ENCODE measurements at regions of chr10 and their contacts with region 1.

Region 1: GRCh38 chr10:43436400-43437140 is at the start of gene ZNF487:
- DNase-seq: peak; percentile 83 to 97
- H3K4me3 ChIP-seq: peak within 1 kb of the TSS; percentile 98
- H3K27ac ChIP-seq: peak within 1 kb of the TSS; percentile 88
- H3K4me1 ChIP-seq: 0 out of 2 replicates have a peak, but pooled peaks cover 4% of the 10 kb centered on the region
- H3K27me3 ChIP-seq: no peaks in the 10 kb centered on the region
- CTCF ChIP-seq: no peak
- total RNA-seq, gene ZNF487: 11.8 and 14.5 TPM in 2 replicates

Region 2: GRCh38 chr10:43380610-43381222 is 55.9 kb before region 1 on chr10:
- CTCF ChIA-PET with region 1: no interaction called
- POLR2A ChIA-PET with region 1: interaction called, 15 read pairs
- intact Hi-C with region 1: no loop called
- DNase-seq: peak in 1 of 2 experiments; percentile 39
- H3K4me3 ChIP-seq: no peak overlapping the region
- H3K27ac ChIP-seq: peak overlapping the region; percentile 78
- H3K4me1 ChIP-seq: peaks cover 5% of the 10 kb centered on the region
- H3K27me3 ChIP-seq: no peaks in the 10 kb centered on the region
- CTCF ChIP-seq: peak; percentile 46; the same call in 1 of the 2 replicates

Region 3: DNA sequence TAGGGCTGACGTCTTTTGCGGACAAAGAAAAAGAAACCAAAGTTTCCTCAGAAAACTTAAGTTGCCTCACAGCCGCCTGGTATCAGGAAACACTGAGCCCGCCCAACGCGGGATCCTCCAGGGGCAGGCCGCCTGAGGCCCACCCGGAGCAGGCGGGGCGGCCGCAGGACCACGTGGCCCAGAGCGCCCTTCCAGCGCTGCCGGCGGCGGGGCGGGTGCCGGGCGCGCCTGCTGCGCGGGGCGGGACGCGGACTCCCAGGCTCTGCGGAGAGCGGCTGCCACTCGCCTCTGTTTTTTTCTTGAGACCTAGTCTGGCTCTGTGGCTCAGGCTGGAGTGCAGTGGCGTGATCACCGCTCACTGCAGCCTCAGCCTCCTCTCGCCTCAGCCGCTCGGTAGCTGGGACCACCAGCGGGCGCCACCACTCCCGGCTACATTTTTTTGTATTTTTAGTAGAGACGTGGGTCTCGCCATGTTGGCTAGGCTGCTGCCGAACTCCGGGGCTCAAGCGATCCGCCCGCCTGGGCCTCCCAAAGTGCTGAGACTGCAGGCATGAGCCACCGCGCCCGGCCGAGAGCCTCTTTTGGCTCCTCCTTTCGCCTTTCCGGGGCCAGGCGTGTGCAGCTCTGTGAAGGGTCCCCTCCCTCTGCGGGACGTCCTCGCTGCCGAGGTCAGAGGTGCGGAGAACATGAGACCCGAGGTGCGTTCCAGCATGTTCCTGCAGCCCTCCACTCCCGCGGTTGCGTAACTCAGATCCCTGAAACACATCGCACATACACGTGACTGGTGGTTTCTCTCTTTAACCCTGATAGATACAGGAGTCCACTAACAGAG is 16.0 kb before region 1 on chr10:
- CTCF ChIA-PET with region 1: interaction called, 8 read pairs
- POLR2A ChIA-PET with region 1: interaction called, 7 read pairs
- intact Hi-C with region 1: loop called (anchors 1 kb)
- DNase-seq: peak; percentile 65 to 91
- H3K4me3 ChIP-seq: peak overlapping the region; percentile 80
- H3K27ac ChIP-seq: peak overlapping the region; percentile 77
- H3K4me1 ChIP-seq: peaks cover 14% of the 10 kb centered on the region
- H3K27me3 ChIP-seq: no peaks in the 10 kb centered on the region
- CTCF ChIP-seq: no peak

Region 4: DNA sequence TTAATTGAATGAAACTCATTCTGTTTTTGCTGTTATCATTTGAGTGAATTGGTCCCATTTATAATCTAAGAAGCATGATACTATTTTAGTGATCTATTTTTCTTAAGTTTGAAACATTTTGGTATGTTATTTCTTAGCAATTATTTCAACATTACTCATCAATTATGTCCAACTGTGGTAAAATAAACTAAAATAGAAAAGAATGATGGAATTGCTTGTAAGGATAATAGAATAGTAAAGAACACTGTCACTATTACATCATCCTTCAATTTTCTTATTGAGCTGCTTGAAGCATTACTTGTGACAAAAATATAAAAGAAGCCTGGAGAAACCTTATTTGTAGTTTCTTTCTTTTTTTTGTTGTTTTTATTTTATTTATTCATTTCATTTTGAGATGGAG is 42.7 kb after region 1 on chr10:
- CTCF ChIA-PET with region 1: no interaction called
- POLR2A ChIA-PET with region 1: no interaction called
- intact Hi-C with region 1: no loop called
- DNase-seq: no peak
- H3K4me3 ChIP-seq: no peak overlapping the region
- H3K27ac ChIP-seq: no peak overlapping the region
- H3K4me1 ChIP-seq: no peaks in the 10 kb centered on the region
- H3K27me3 ChIP-seq: no peaks in the 10 kb centered on the region
- CTCF ChIP-seq: no peak

Region 5: DNA sequence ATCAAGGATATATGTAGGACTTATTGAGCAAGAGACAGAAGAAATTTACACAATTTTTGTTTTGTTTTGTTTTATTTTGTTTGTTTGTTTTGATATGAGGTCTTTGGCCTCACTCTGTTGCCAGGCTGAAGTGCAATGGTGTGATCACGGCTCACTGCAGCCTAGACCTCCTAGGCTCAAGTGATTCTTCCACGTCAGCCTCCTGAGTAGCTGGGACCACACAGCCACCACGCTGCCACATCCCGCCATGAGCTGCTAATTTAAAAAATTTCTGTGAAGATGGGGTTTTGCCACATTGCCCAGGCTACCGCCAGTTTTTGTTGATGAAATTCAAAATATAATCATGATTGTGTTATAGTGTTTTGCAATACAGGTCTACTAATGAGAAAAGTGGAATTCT is 55.3 kb after region 1 on chr10:
- CTCF ChIA-PET with region 1: no interaction called
- POLR2A ChIA-PET with region 1: no interaction called
- intact Hi-C with region 1: no loop called
- DNase-seq: no peak
- H3K4me3 ChIP-seq: no peak overlapping the region
- H3K27ac ChIP-seq: no peak overlapping the region
- H3K4me1 ChIP-seq: no peaks in the 10 kb centered on the region
- H3K27me3 ChIP-seq: no peaks in the 10 kb centered on the region
- CTCF ChIP-seq: no peak